HCT116 (cell line): ENCODE measurements at regions of chr1 and their contacts with region 1.

Region 1: DNA sequence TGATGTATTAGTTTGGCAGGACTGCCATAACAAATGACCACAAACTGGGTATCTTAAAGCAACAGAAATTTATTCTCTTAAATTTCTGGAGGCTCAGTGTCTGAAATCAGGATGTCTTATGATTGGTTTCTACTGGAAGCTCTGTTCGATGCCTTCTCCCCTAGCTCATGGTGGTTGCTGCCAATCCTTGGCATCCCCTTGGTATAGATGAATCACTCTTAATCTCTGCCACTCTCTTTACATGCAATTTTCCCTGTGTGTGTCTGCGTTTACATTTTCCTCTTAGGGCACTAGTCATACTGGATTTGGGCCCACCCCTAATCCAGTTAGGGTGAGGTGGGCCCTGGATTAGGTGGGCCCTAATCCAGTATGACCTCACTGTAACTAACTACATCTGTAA is 54.7 kb upstream of the MPC2 start:
- DNase-seq: no peak
- ATAC-seq: no peak
- H3K4me3 ChIP-seq: no peak overlapping the region
- H3K27ac ChIP-seq: no peak overlapping the region
- H3K4me1 ChIP-seq: 0 out of 4 replicates have a peak, but pooled peaks cover 0 to 6% of the 10 kb centered on the region in 2 experiments
- H3K27me3 ChIP-seq: no peaks in the 10 kb centered on the region
- CTCF ChIP-seq: no peak
- POLR2A ChIP-seq: no peak
- RAD21 ChIP-seq: no peak

Region 2: DNA sequence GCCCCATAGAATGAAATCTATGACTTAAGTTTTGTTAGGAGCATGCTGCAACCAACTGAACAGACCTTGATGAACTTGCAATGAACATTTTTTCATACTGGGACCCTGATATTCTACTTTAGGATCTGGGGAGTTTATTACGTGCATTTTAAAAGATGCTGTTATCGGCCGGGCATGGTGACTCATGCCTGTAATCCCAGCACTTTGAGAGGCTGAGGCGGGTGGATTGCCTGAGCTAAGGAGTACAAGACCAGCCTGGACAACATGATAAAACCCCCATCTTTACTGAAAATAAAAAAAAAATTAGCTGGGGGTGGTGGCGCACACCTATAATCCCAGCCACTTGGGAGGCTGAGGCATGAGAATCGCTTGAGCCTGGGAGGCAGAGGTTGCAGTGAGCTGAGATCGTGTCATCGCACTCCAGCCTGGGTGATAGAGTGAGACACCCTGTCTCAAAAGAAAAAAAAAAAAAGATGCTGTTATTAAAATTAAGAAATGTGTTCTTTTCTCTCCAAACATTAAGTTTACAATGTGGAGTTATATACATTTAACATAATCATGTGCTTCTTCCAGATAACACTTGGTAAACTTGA is 262.6 kb before region 1 on chr1:
- CTCF ChIA-PET with region 1: no interaction called
- POLR2A ChIA-PET with region 1: no interaction called
- RAD21 ChIA-PET with region 1: no interaction called
- intact Hi-C with region 1: loop called (anchors 5 kb)
- DNase-seq: no peak
- ATAC-seq: no peak
- H3K4me3 ChIP-seq: no peak overlapping the region
- H3K27ac ChIP-seq: no peak overlapping the region
- H3K4me1 ChIP-seq: peaks cover 0 to 1% of the 10 kb centered on the region in 2 experiments; a peak in 1 of 4 replicates
- H3K27me3 ChIP-seq: no peaks in the 10 kb centered on the region
- CTCF ChIP-seq: no peak
- POLR2A ChIP-seq: no peak
- RAD21 ChIP-seq: no peak